AG04449 (cell line): ENCODE measurements at regions of chr6 and their contacts with region 1.

Region 1: DNA sequence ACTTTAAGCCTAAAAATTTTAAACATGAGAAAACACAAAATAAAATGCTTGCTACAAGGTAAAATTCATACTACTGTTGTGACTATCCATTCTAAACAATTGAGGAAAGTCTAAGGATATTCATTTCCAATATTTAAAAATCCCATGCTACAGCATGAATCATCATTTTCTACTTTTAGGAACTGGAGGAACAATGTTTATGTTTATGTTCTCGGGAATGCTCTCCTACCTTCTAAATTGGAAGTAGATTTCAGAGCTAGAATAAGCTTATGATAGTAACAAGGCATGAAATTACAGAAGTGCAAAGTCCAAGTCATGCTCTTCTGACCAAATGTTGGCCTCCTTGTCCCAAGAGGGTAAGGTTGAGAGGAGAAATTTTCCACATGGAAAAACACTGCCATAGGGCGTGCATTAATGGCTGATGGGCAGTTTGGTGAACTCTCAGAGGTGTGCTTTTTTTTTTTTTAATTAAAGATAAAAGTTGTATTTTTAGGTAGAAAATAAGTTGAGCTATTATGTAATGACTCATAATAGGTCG is 6.0 kb upstream of the MYLK4 start:
- DNase-seq: no peak
- H3K4me3 ChIP-seq: no peak overlapping the region
- CTCF ChIP-seq: no peak

Region 2: GRCh38 chr6:2738373-2738979 is 18.3 kb before region 1 on chr6:
- CTCF ChIA-PET with region 1: interaction called, 143 read pairs
- POLR2A ChIA-PET with region 1: no interaction called
- DNase-seq: no peak
- H3K4me3 ChIP-seq: no peak overlapping the region
- CTCF ChIP-seq: peak; percentile 62